ENCODE measurements at regions of chr1 and their contacts with region 1.

Region 1: GRCh38 chr1:199399996-199400724 is 627.4 kb upstream of the NR5A2 start:
- DNase-seq: no peak
- H3K4me3 ChIP-seq: no peak overlapping the region
- H3K27ac ChIP-seq: no peak overlapping the region
- H3K4me1 ChIP-seq: no peaks in the 10 kb centered on the region
- H3K27me3 ChIP-seq: no peaks in the 10 kb centered on the region
- CTCF ChIP-seq: no peak

Region 2: GRCh38 chr1:199490804-199491527 is 90.8 kb after region 1 on chr1:
- CTCF ChIA-PET with region 1: no interaction called
- POLR2A ChIA-PET with region 1: interaction called, 16 read pairs
- intact Hi-C with region 1: no loop called
- DNase-seq: peak in 1 of 2 experiments; percentile 47
- H3K4me3 ChIP-seq: no peak overlapping the region
- H3K27ac ChIP-seq: no peak overlapping the region
- H3K4me1 ChIP-seq: peaks cover 11% of the 10 kb centered on the region; the same call in 1 of the 2 replicates
- H3K27me3 ChIP-seq: no peaks in the 10 kb centered on the region
- CTCF ChIP-seq: no peak